Mammary epithelial cell (primary cell): ENCODE measurements at regions of chr16 and their contacts with region 1.

Region 1: GRCh38 chr16:57071831-57072582 is 20.4 kb upstream of the CPNE2 start:
- DNase-seq: peak; percentile 83
- H3K4me3 ChIP-seq: no peak overlapping the region
- H3K27ac ChIP-seq: no peak overlapping the region
- H3K4me1 ChIP-seq: peaks cover 10% of the 10 kb centered on the region
- H3K27me3 ChIP-seq: no peaks in the 10 kb centered on the region
- CTCF ChIP-seq: no peak

Region 2: DNA sequence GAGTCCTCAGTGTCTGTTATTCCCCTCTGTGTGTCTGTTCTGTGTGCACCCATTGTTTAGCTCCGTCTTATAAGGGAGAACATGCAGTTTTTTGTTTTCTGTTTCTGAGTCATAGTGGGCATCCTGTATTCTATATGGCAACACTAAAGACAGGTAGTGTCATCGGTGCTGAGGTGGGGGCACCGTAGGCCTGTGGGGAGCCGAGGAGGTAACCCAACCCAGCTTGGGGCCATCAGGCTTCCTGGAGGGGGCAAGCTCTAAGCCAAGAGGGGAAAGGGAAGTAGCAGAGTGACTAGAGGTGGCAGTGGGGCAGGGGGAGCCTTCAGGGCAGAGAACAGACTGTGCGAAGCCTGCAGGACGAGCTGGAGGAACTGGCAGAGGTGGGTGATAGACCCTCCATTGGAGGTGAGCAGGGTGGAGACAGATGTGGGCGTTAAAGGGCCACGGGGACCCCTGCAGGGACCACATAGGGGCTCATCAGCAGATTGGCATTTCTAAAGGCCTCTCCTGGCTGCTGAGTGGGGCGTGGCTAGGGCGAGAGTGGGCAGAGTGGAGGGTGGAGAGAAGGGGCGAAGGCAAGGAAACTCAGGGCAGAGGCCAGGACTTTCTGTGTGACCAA is 56.9 kb after region 1 on chr16:
- CTCF ChIA-PET with region 1: no interaction called
- dilution Hi-C with region 1: loop called (anchors 10 kb)
- in situ Hi-C with region 1: no loop called
- intact Hi-C with region 1: no loop called
- DNase-seq: no peak
- H3K4me3 ChIP-seq: no peak overlapping the region
- H3K27ac ChIP-seq: no peak overlapping the region
- H3K4me1 ChIP-seq: no peaks in the 10 kb centered on the region
- H3K27me3 ChIP-seq: no peaks in the 10 kb centered on the region
- CTCF ChIP-seq: no peak